IMR-90 (cell line): ENCODE measurements at regions of chr4 and their contacts with region 1.

Region 1: GRCh38 chr4:128502818-128503527 is 215.4 kb upstream of the PGRMC2 start:
- DNase-seq: no peak
- ATAC-seq: no peak
- H3K4me3 ChIP-seq: no peak overlapping the region
- H3K27ac ChIP-seq: no peak overlapping the region
- H3K4me1 ChIP-seq: no peaks in the 10 kb centered on the region
- H3K27me3 ChIP-seq: no peaks in the 10 kb centered on the region
- CTCF ChIP-seq: no peak
- POLR2A ChIP-seq: no peak
- RAD21 ChIP-seq: no peak

Region 2: DNA sequence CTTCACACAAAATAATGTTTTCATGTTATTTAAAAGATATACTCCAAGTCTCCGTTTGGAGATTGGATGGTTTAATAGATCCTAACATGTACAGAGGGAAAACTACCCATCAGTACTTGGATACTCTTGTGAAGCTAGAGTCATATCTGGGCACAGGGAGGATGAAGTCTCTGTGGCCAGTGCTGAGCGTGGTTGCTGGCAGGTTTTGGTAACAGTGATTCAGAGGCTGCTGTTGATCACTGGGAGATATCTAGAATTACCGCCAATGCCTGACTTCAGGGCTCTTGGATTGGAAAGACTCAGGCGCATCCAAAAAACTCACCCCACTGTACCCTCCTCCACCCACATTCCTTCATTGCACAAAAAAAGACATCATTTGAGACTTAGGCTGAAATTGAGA is 108.2 kb before region 1 on chr4:
- CTCF ChIA-PET with region 1: no interaction called
- POLR2A ChIA-PET with region 1: no interaction called
- dilution Hi-C with region 1: no loop called
- in situ Hi-C with region 1: no loop called
- intact Hi-C with region 1: loop called (anchors 1 kb)
- DNase-seq: peak; percentile 36
- ATAC-seq: no peak
- H3K4me3 ChIP-seq: no peak overlapping the region
- H3K27ac ChIP-seq: no peak overlapping the region
- H3K4me1 ChIP-seq: peaks cover 7% of the 10 kb centered on the region
- H3K27me3 ChIP-seq: no peaks in the 10 kb centered on the region
- CTCF ChIP-seq: no peak
- POLR2A ChIP-seq: no peak
- RAD21 ChIP-seq: no peak

Region 3: DNA sequence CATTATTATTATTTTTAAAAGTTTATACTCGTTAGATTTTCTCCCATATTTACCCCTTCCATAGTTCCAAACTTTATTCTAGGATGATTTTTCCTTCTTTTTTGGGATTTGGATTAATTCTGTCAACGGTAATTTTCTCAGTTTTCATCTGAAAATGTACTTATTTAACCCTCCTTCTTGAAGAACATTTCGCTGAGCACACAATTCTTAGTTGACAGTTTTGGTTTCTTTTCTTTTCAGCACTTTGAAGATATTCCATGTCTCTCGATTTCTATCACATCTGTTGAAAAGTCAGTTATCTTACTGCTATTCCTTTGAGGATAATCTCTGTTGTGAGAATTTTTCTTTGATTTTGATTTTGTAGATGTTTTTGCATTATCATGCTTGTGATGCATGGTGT is 505.1 kb after region 1 on chr4:
- CTCF ChIA-PET with region 1: no interaction called
- POLR2A ChIA-PET with region 1: no interaction called
- dilution Hi-C with region 1: no loop called
- in situ Hi-C with region 1: no loop called
- intact Hi-C with region 1: no loop called
- DNase-seq: no peak
- ATAC-seq: no peak
- H3K4me3 ChIP-seq: no peak overlapping the region
- H3K27ac ChIP-seq: no peak overlapping the region
- H3K4me1 ChIP-seq: no peaks in the 10 kb centered on the region
- H3K27me3 ChIP-seq: no peaks in the 10 kb centered on the region
- CTCF ChIP-seq: no peak
- POLR2A ChIP-seq: no peak
- RAD21 ChIP-seq: no peak

Region 4: DNA sequence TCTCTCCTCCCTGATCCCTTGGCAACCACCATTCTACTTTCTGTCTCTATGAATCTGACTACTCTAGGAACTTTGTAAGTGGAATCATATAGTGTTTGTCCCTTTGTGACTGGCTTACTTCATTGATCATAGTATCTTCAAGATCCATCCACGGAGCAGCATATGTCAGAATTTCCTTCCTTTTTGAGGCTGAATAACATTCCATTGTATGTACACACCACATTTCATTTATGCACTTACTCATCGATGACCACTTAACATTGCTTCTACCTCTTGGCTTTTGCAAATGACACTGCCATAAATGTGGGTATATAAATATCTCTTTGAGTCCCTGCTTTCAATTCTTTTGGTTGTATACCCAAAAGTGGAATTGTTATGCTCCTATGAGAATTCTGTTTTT is 1058.9 kb after region 1 on chr4:
- CTCF ChIA-PET with region 1: no interaction called
- POLR2A ChIA-PET with region 1: no interaction called
- dilution Hi-C with region 1: no loop called
- in situ Hi-C with region 1: no loop called
- intact Hi-C with region 1: no loop called
- DNase-seq: no peak
- ATAC-seq: no peak
- H3K4me3 ChIP-seq: no peak overlapping the region
- H3K27ac ChIP-seq: no peak overlapping the region
- H3K4me1 ChIP-seq: no peaks in the 10 kb centered on the region
- H3K27me3 ChIP-seq: no peaks in the 10 kb centered on the region
- CTCF ChIP-seq: no peak
- POLR2A ChIP-seq: no peak
- RAD21 ChIP-seq: no peak